Caco-2 (cell line): ENCODE measurements at regions of chr6 and their contacts with region 1.

Region 1: GRCh38 chr6:119255492-119255891 is 94.1 kb downstream of the MAN1A1 start:
- DNase-seq: no peak
- H3K4me3 ChIP-seq: no peak overlapping the region
- H3K4me3 Mint-ChIP-seq: no peak overlapping the region
- H3K27ac Mint-ChIP-seq: no peak overlapping the region
- H3K4me1 ChIP-seq: peaks cover 9% of the 10 kb centered on the region; the same call in 1 of the 2 replicates
- H3K4me1 Mint-ChIP-seq: peaks cover 15% of the 10 kb centered on the region
- H3K27me3 ChIP-seq: no peaks in the 10 kb centered on the region
- H3K27me3 Mint-ChIP-seq: no peaks in the 10 kb centered on the region
- CTCF ChIP-seq: no peak

Region 2: GRCh38 chr6:119209452-119210205 is 45.9 kb before region 1 on chr6:
- CTCF ChIA-PET with region 1: no interaction called
- POLR2A ChIA-PET with region 1: interaction called, 13 read pairs
- intact Hi-C with region 1: no loop called
- DNase-seq: no peak
- H3K4me3 ChIP-seq: no peak overlapping the region
- H3K4me3 Mint-ChIP-seq: no peak overlapping the region
- H3K27ac Mint-ChIP-seq: no peak overlapping the region
- H3K4me1 ChIP-seq: no peaks in the 10 kb centered on the region
- H3K4me1 Mint-ChIP-seq: peaks cover 8% of the 10 kb centered on the region
- H3K27me3 ChIP-seq: no peaks in the 10 kb centered on the region
- H3K27me3 Mint-ChIP-seq: no peaks in the 10 kb centered on the region
- CTCF ChIP-seq: no peak